Esophagus muscularis mucosa (tissue), 4 donors: ENCODE measurements at regions of chr20 and their contacts with region 1.

Region 1: GRCh38 chr20:208942-209566 is 18.0 kb upstream of the DEFB129 start:
- DNase-seq: no peak
- H3K4me3 ChIP-seq: no peak overlapping the region
- H3K27ac ChIP-seq: no peak overlapping the region
- H3K4me1 ChIP-seq: peaks cover 0 to 5% (median 0%) of the 10 kb centered on the region in 4 donors
- H3K27me3 ChIP-seq: no peaks in the 10 kb centered on the region
- CTCF ChIP-seq: peak; percentile 37 to 55 (median 37)
- EP300 ChIP-seq: no peak
- POLR2A ChIP-seq: no peak

Region 2: DNA sequence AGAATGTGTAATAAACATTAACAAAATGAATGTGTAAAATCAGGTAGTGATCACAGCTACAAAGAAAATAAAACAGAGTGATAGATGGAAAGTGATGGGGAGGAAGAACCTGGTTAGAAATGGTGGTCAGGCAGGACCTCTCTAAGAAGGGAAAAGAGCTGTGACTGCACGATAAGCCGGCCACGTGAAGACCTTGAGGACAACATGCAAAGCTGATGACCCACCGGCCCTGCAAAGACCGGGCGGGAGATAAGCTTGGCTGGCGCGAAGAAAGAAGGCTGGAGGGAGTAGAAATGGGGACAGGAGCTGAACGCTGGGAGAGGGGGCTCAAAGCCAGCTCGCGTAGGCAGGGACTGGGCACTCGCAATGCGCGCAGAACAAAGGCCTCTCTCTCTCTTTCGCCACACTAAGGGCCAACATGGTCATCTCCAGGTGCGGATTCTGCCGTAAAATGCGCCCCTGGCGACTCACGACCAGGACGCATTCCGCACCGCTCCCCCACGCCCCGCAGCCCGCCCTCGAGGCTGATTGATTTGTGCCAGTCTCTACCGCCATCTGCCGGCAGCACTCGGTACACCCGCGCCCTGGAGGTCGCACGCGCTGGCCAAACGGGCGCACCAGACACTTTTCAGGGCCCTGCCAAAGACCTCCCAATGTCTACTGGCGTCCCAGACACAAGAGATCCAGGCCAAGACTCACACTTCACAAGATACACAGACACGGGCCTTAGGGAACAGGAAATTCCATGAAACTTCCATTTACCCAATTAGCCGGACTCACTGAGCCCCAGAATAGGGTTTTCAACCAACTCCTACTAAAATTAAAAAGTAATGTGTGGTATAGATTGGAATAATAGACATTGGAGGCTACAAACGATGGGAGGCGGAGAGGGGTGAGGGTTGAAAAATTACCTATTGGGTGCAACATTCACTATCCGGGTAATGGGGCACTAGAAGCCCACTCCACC is 57.8 kb after region 1 on chr20:
- intact Hi-C with region 1: loop called (anchors 5 kb)
- DNase-seq: peak; percentile 97
- H3K4me3 ChIP-seq: peak overlapping the region; percentile 53 to 62 (median 55)
- H3K27ac ChIP-seq: peak overlapping the region in 1 of 4 donors; percentile 23
- H3K4me1 ChIP-seq: peaks cover 4 to 14% (median 12%) of the 10 kb centered on the region in 4 donors
- H3K27me3 ChIP-seq: peaks cover 0 to 10% (median 0%) of the 10 kb centered on the region in 4 donors
- CTCF ChIP-seq: peak in 2 of 3 experiments; percentile 93 to 95
- EP300 ChIP-seq: no peak
- POLR2A ChIP-seq: no peak

Region 3: DNA sequence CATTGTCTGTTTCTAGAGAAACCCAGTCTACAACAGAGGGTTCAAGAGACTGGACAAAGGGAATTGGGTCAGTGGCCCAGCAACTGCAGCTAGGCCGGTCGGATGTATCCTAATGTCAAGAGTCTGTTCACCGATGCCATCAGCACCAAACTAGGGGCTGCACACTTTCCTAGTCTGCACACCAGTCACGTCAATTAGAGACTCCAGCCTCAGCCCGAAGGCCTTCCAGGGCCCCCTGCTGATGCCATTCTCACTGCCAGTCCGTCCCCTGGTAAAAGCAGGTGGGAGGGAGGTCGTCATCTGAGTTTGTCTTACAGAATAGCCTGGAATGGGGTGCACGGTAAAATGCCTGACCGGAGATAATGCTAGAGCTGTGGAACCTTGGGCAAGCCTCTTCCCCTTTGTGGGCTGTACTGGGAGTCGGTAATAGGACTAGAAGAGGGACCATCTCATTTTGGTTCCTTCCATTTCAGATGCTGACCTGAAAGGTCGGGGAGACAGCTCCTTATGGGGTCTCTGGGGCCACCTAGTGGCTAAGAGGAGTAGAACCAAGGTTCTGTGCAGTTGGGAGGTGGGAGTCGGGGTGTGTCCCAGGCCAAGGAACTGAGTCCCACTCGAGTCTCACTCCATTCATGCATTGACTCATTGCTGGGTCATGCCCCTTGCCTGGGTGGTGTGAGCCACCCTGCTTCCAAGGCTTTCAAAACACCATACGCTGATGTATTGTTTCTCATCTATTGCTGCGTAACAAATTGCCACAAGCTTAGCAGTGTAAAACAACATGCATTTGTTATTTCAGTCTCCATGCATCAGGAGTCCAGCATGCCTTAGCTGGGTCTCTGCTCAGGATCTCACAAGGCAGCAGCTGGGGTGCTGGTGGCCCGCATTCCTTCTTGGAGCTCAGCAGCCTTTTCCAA is 121.4 kb after region 1 on chr20:
- intact Hi-C with region 1: loop called (anchors 5 kb)
- DNase-seq: no peak
- H3K4me3 ChIP-seq: no peak overlapping the region
- H3K27ac ChIP-seq: peak overlapping the region; percentile 7 to 98 (median 97)
- H3K4me1 ChIP-seq: peaks cover 11 to 56% (median 48%) of the 10 kb centered on the region in 4 donors
- H3K27me3 ChIP-seq: no peaks in the 10 kb centered on the region
- CTCF ChIP-seq: peak; percentile 76 to 86 (median 80)
- EP300 ChIP-seq: no peak
- POLR2A ChIP-seq: no peak